Activated CD8-positive, alpha-beta memory T cell treated with anti-CD3 and anti-CD28 coated beads, Interleukin-2, amount 10 ng/mL, durations not matched to agents 7 days and 5 days (primary cell): ENCODE measurements at regions of chr22 and their contacts with region 1.

Region 1: DNA sequence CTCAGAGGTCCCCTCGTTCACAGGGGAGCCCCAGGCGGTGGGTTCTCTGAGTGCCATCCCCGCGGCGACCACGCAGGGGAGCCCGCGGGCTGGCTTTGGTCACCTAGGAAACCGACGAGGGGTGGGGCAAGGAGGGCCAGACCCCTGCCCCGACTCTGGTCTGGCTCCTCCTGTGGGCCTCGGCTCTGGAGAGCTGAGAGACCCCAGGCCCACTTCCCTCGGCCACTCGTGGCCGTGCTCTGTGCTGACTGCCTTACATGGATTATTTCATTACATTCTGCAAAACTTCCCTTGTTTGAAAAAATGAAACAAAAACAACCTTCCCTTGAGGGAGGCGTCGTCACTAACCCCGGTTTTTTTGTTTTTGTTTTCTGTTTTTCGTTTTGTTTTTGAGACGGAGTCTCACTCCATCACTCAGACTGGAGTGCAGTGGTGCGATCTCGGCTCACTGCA is 15.1 kb upstream of the CYTH4 start:
- DNase-seq: peak; percentile 83
- ATAC-seq: peak; percentile 90
- H3K4me3 Mint-ChIP-seq: peak overlapping the region; percentile 86
- H3K27ac Mint-ChIP-seq: peak overlapping the region; percentile 92
- H3K4me1 Mint-ChIP-seq: peaks cover 30% of the 10 kb centered on the region
- H3K27me3 Mint-ChIP-seq: peaks cover 4% of the 10 kb centered on the region

Region 2: GRCh38 chr22:37077884-37078485 is 189.2 kb before region 1 on chr22:
- CTCF ChIA-PET with region 1: no interaction called
- DNase-seq: peak; percentile 90
- ATAC-seq: peak; percentile 16
- H3K4me3 Mint-ChIP-seq: peak overlapping the region; percentile 32
- H3K27ac Mint-ChIP-seq: peak overlapping the region; percentile 99
- H3K4me1 Mint-ChIP-seq: peaks cover 69% of the 10 kb centered on the region
- H3K27me3 Mint-ChIP-seq: no peaks in the 10 kb centered on the region

Region 3: GRCh38 chr22:37109242-37109917 is 157.8 kb before region 1 on chr22 and contains the start of gene TMPRSS6:
- CTCF ChIA-PET with region 1: no interaction called
- DNase-seq: no peak
- ATAC-seq: no peak
- H3K4me3 Mint-ChIP-seq: no peak within 1 kb of the TSS
- H3K27ac Mint-ChIP-seq: no peak within 1 kb of the TSS
- H3K4me1 Mint-ChIP-seq: peaks cover 11% of the 10 kb centered on the region
- H3K27me3 Mint-ChIP-seq: no peaks in the 10 kb centered on the region
- total RNA-seq, gene TMPRSS6: 1.3 to 3.3 TPM

Region 4: GRCh38 chr22:37237371-37238268 is 29.5 kb before region 1 on chr22:
- CTCF ChIA-PET with region 1: interaction called, 106 read pairs
- DNase-seq: no peak
- ATAC-seq: no peak
- H3K4me3 Mint-ChIP-seq: peak overlapping the region; percentile 100
- H3K27ac Mint-ChIP-seq: peak overlapping the region; percentile 98
- H3K4me1 Mint-ChIP-seq: peaks cover 90% of the 10 kb centered on the region
- H3K27me3 Mint-ChIP-seq: no peaks in the 10 kb centered on the region

Region 5: GRCh38 chr22:37244114-37244921 is 22.8 kb before region 1 on chr22 and contains the start of gene RAC2:
- CTCF ChIA-PET with region 1: interaction called, 106 read pairs
- DNase-seq: peak; percentile 97
- ATAC-seq: peak; percentile 60
- H3K4me3 Mint-ChIP-seq: peak within 1 kb of the TSS; percentile 100
- H3K27ac Mint-ChIP-seq: peak within 1 kb of the TSS; percentile 98
- H3K4me1 Mint-ChIP-seq: peaks cover 49% of the 10 kb centered on the region
- H3K27me3 Mint-ChIP-seq: no peaks in the 10 kb centered on the region
- total RNA-seq, gene RAC2: 834 to 907 TPM

Region 6: DNA sequence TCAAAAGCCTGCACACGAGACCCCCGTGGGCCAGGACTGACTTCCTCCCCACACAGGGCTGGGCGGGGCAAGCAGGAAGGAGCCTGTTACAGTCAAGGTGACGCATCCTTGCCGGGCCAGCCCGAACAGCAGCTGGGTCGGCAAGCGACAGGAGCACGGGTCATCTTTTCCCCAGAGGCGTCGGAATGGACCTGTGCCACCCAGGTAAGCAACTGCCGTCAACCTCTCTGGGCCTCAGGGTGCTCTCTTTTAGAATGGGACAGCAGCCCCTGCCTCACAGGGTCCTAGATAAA is 15.2 kb after region 1 on chr22 and contains the start of gene CYTH4:
- CTCF ChIA-PET with region 1: interaction called, 26 read pairs
- DNase-seq: peak; percentile 90
- ATAC-seq: peak; percentile 90
- H3K4me3 Mint-ChIP-seq: peak within 1 kb of the TSS; percentile 100
- H3K27ac Mint-ChIP-seq: peak within 1 kb of the TSS; percentile 98
- H3K4me1 Mint-ChIP-seq: peaks cover 58% of the 10 kb centered on the region
- H3K27me3 Mint-ChIP-seq: no peaks in the 10 kb centered on the region
- total RNA-seq, gene CYTH4: 97.8 to 123 TPM

Region 7: GRCh38 chr22:37309211-37310074 is 42.3 kb after region 1 on chr22:
- CTCF ChIA-PET with region 1: interaction called, 13 read pairs
- DNase-seq: peak; percentile 90
- ATAC-seq: peak; percentile 54
- H3K4me3 Mint-ChIP-seq: peak overlapping the region; percentile 51
- H3K27ac Mint-ChIP-seq: peak overlapping the region; percentile 100
- H3K4me1 Mint-ChIP-seq: peaks cover 92% of the 10 kb centered on the region
- H3K27me3 Mint-ChIP-seq: no peaks in the 10 kb centered on the region

Region 8: GRCh38 chr22:37316875-37317371 is 49.8 kb after region 1 on chr22:
- CTCF ChIA-PET with region 1: interaction called, 13 read pairs
- DNase-seq: peak; percentile 85
- ATAC-seq: peak; percentile 83
- H3K4me3 Mint-ChIP-seq: no peak overlapping the region
- H3K27ac Mint-ChIP-seq: no peak overlapping the region
- H3K4me1 Mint-ChIP-seq: peaks cover 42% of the 10 kb centered on the region
- H3K27me3 Mint-ChIP-seq: peaks cover 11% of the 10 kb centered on the region

Region 9: GRCh38 chr22:37428649-37429586 is 161.8 kb after region 1 on chr22:
- CTCF ChIA-PET with region 1: interaction called, 23 read pairs
- DNase-seq: peak; percentile 69
- ATAC-seq: peak; percentile 56
- H3K4me3 Mint-ChIP-seq: no peak overlapping the region
- H3K27ac Mint-ChIP-seq: no peak overlapping the region
- H3K4me1 Mint-ChIP-seq: peaks cover 18% of the 10 kb centered on the region
- H3K27me3 Mint-ChIP-seq: peaks cover 58% of the 10 kb centered on the region

Region 10: GRCh38 chr22:37502342-37503182 is 235.4 kb after region 1 on chr22:
- CTCF ChIA-PET with region 1: no interaction called
- DNase-seq: no peak
- ATAC-seq: no peak
- H3K4me3 Mint-ChIP-seq: no peak overlapping the region
- H3K27ac Mint-ChIP-seq: no peak overlapping the region
- H3K4me1 Mint-ChIP-seq: peaks cover 14% of the 10 kb centered on the region
- H3K27me3 Mint-ChIP-seq: peaks cover 7% of the 10 kb centered on the region